CD8-positive, alpha-beta T cell (primary cell): ENCODE measurements at regions of chr2 and their contacts with region 1.

Region 1: DNA sequence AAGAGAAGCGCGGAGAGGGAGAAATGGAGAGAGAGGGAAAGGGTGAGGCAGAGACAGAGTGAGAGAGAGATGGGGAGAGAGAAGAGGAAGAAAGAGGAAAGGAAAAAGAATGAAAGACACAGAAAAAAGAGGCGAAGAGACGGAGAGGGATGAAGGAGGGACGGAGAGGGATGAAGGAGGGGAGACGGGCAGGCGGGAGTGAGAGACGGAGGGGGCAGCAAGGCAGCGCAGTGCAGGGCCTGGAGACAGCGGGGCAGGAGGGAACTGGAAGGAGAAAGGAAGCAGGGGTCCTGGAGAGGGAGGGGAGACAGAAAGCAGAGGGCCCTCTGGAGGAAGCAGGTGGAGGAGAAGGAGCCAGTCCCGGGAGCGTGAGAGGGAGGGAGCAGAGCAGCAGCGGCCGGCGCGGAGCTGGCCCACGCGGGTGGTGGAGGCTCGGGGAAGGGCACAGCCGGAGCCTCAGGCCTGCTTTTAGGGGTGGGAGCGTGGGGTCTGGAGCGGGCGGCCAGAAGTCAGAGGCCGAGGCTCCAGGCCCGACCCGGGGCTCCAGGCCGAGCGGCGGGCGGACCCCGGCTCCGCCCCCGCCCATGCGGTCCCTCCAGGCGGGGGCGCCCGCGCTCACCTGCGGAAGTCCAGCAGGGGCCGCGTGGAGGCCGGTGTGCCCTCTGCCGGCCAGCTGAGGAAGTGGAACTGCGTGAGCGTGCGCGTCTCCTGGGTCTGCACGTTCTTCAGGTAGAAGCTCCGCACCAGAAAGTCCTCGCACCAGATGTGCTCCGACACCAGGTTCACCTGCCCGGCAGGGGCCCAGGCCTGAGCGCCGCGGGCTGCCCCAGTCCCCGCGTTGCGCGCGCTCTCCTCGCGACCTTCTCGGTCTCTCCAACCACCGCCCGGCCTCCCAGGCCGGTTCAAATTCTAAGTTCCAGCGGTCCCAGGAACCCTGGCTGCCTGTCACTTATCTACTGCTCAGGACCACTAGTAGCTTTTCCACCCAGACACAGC is 14.5 kb downstream of the PTPRN start:
- DNase-seq: peak; percentile 79 to 94 (median 87)
- ATAC-seq: peak; percentile 94
- H3K4me3 ChIP-seq: peak overlapping the region; percentile 49
- H3K4me3 Mint-ChIP-seq: peak overlapping the region; percentile 72
- H3K27ac ChIP-seq: peak overlapping the region; percentile 14 to 59
- H3K27ac Mint-ChIP-seq: peak overlapping the region; percentile 86
- H3K4me1 ChIP-seq: peaks cover 39% of the 10 kb centered on the region
- H3K4me1 Mint-ChIP-seq: peaks cover 37% of the 10 kb centered on the region
- H3K27me3 ChIP-seq: peaks cover 0 to 2% of the 10 kb centered on the region in 2 experiments
- H3K27me3 Mint-ChIP-seq: peaks cover 2% of the 10 kb centered on the region
- CTCF ChIP-seq: peak; percentile 98

Region 2: GRCh38 chr2:219057709-219058540 is 236.7 kb before region 1 on chr2:
- CTCF ChIA-PET with region 1: interaction called, 9 read pairs
- POLR2A ChIA-PET with region 1: no interaction called
- intact Hi-C with region 1: loop called (anchors 1 to 2 kb)
- DNase-seq: peak; percentile 62 to 85 (median 74)
- ATAC-seq: peak; percentile 96
- H3K4me3 ChIP-seq: no peak overlapping the region
- H3K4me3 Mint-ChIP-seq: peak overlapping the region; percentile 55
- H3K27ac ChIP-seq: no peak overlapping the region
- H3K27ac Mint-ChIP-seq: no peak overlapping the region
- H3K4me1 ChIP-seq: peaks cover 35% of the 10 kb centered on the region
- H3K4me1 Mint-ChIP-seq: peaks cover 26% of the 10 kb centered on the region
- H3K27me3 ChIP-seq: peaks cover 26 to 37% of the 10 kb centered on the region in 2 experiments
- H3K27me3 Mint-ChIP-seq: peaks cover 58% of the 10 kb centered on the region
- CTCF ChIP-seq: peak; percentile 92

Region 3: DNA sequence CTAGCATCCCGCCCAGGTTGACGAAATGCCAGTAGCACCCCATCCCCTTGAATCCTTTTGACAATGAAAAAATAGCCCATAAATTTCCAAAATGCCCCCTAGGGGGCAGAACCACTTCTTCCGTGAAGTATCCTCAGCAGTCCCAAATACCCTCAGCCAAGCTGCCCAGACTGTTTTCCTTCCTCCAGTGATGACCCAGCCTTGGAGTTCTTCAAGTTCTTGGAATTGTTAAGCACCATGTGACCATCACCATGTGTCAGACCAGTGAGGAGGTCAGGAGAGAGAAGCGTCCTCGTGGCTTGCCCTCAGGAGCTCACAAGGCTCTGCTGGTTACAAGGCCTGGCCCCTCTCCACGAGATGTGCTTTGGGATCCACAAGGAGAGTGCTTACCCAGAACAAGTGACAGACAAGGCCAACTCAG is 123.4 kb before region 1 on chr2:
- CTCF ChIA-PET with region 1: interaction called, 37 read pairs
- POLR2A ChIA-PET with region 1: interaction called, 4 read pairs
- intact Hi-C with region 1: no loop called
- DNase-seq: peak in 5 of 9 experiments; percentile 43 to 69 (median 55)
- ATAC-seq: peak; percentile 76
- H3K4me3 ChIP-seq: no peak overlapping the region
- H3K4me3 Mint-ChIP-seq: no peak overlapping the region
- H3K27ac ChIP-seq: peak overlapping the region in 1 of 2 experiments; percentile 13
- H3K27ac Mint-ChIP-seq: no peak overlapping the region
- H3K4me1 ChIP-seq: peaks cover 24% of the 10 kb centered on the region
- H3K4me1 Mint-ChIP-seq: peaks cover 28% of the 10 kb centered on the region
- H3K27me3 ChIP-seq: no peaks in the 10 kb centered on the region
- H3K27me3 Mint-ChIP-seq: no peaks in the 10 kb centered on the region
- CTCF ChIP-seq: peak; percentile 79

Region 4: GRCh38 chr2:219218732-219219701 is 75.6 kb before region 1 on chr2 and contains the start of gene ABCB6:
- CTCF ChIA-PET with region 1: interaction called, 18 read pairs
- POLR2A ChIA-PET with region 1: interaction called, 4 read pairs
- intact Hi-C with region 1: no loop called
- DNase-seq: peak; percentile 59 to 92 (median 87)
- ATAC-seq: peak; percentile 91
- H3K4me3 ChIP-seq: peak within 1 kb of the TSS; percentile 50 to 87
- H3K4me3 Mint-ChIP-seq: peak within 1 kb of the TSS; percentile 82
- H3K27ac ChIP-seq: peak within 1 kb of the TSS; percentile 43 to 47
- H3K27ac Mint-ChIP-seq: peak within 1 kb of the TSS; percentile 72
- H3K4me1 ChIP-seq: peaks cover 23% of the 10 kb centered on the region
- H3K4me1 Mint-ChIP-seq: peaks cover 19% of the 10 kb centered on the region
- H3K27me3 ChIP-seq: no peaks in the 10 kb centered on the region
- H3K27me3 Mint-ChIP-seq: no peaks in the 10 kb centered on the region
- CTCF ChIP-seq: no peak
- total RNA-seq, gene ABCB6: 3.4 to 3.5 TPM

Region 5: GRCh38 chr2:219253753-219254590 is 40.7 kb before region 1 on chr2 and contains the start of gene TUBA4A:
- CTCF ChIA-PET with region 1: interaction called, 26 read pairs
- POLR2A ChIA-PET with region 1: interaction called, 21 read pairs
- intact Hi-C with region 1: loop called (anchors 1 to 2 kb)
- DNase-seq: peak; percentile 82 to 95 (median 91)
- ATAC-seq: peak; percentile 74
- H3K4me3 ChIP-seq: peak within 1 kb of the TSS; percentile 98 to 100
- H3K4me3 Mint-ChIP-seq: peak within 1 kb of the TSS; percentile 87
- H3K27ac ChIP-seq: peak within 1 kb of the TSS; percentile 81 to 93
- H3K27ac Mint-ChIP-seq: peak within 1 kb of the TSS; percentile 96
- H3K4me1 ChIP-seq: peaks cover 37% of the 10 kb centered on the region
- H3K4me1 Mint-ChIP-seq: peaks cover 46% of the 10 kb centered on the region
- H3K27me3 ChIP-seq: no peaks in the 10 kb centered on the region
- H3K27me3 Mint-ChIP-seq: no peaks in the 10 kb centered on the region
- CTCF ChIP-seq: no peak
- total RNA-seq, gene TUBA4A: 322 TPM

Region 6: GRCh38 chr2:219278655-219279516 is 15.8 kb before region 1 on chr2 and contains the start of gene DNAJB2:
- CTCF ChIA-PET with region 1: interaction called, 269 read pairs
- POLR2A ChIA-PET with region 1: interaction called, 42 read pairs
- intact Hi-C with region 1: loop called (anchors 1 kb)
- DNase-seq: peak; percentile 97 to 100 (median 99)
- ATAC-seq: peak; percentile 74
- H3K4me3 ChIP-seq: peak within 1 kb of the TSS; percentile 56 to 76
- H3K4me3 Mint-ChIP-seq: peak within 1 kb of the TSS; percentile 90
- H3K27ac ChIP-seq: peak within 1 kb of the TSS; percentile 98 to 99
- H3K27ac Mint-ChIP-seq: peak within 1 kb of the TSS; percentile 99
- H3K4me1 ChIP-seq: peaks cover 31% of the 10 kb centered on the region
- H3K4me1 Mint-ChIP-seq: peaks cover 38% of the 10 kb centered on the region
- H3K27me3 ChIP-seq: no peaks in the 10 kb centered on the region
- H3K27me3 Mint-ChIP-seq: no peaks in the 10 kb centered on the region
- CTCF ChIP-seq: no peak
- total RNA-seq, gene DNAJB2: 108 to 123 TPM

Region 7: GRCh38 chr2:219327719-219328118 is 33.1 kb after region 1 on chr2:
- CTCF ChIA-PET with region 1: no interaction called
- POLR2A ChIA-PET with region 1: no interaction called
- intact Hi-C with region 1: no loop called
- DNase-seq: no peak
- ATAC-seq: no peak
- H3K4me3 ChIP-seq: no peak overlapping the region
- H3K4me3 Mint-ChIP-seq: no peak overlapping the region
- H3K27ac ChIP-seq: no peak overlapping the region
- H3K27ac Mint-ChIP-seq: no peak overlapping the region
- H3K4me1 ChIP-seq: no peaks in the 10 kb centered on the region
- H3K4me1 Mint-ChIP-seq: no peaks in the 10 kb centered on the region
- H3K27me3 ChIP-seq: peaks cover 13 to 16% of the 10 kb centered on the region in 2 experiments
- H3K27me3 Mint-ChIP-seq: peaks cover 48% of the 10 kb centered on the region
- CTCF ChIP-seq: no peak